Kidney (tissue), 22 donors: ENCODE measurements at regions of chr17 and their contacts with region 1.

Region 1: DNA sequence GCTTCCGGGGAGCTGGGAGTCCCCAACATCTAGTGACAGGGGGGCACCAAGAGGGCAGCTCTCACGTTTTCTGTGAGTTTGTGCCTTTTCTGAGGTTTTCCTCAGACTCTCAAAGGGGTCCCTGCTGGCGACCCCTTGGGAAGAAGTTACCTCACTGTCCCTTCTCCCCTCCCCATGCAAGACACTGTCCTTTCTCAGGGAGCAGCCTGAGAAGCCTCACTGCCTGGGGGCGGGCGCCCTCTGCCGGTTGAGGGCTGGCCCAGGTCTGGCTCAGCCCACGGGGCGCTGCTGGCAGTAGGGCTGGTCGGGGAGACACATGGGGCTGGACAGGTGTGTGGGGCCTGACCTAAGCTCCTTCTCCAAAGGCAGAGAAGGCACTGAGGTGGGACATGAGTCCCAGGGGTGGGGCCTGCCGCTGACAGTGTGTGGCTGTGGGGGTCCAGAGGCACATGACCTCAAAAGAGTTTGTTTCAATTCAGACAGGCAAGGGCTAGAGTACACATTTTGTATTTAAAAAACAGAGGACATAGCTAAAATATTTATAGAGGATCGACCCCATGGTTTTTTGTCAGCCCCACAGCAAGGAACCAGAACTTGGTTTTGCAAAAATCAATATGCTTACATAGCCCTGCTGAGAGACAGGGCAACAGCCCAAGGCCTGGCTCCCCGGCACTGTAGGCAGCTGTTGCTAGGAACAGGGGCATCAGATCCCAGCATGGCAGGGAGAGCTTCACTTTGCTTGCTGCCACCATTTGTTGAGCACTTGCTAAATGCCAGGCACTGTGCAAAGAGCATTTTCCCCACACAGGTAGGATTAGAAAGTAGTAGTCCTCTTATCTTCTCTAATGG is 18.5 kb upstream of the ALDH3A1 start:
- DNase-seq: peak; percentile 70 to 90 (median 79)
- H3K4me3 ChIP-seq: no peak overlapping the region
- H3K27ac ChIP-seq: no peak overlapping the region
- H3K4me1 ChIP-seq: peaks cover 0 to 3% (median 0%) of the 10 kb centered on the region in 3 donors
- H3K27me3 ChIP-seq: no peaks in the 10 kb centered on the region
- CTCF ChIP-seq: peak; percentile 92

Region 2: GRCh38 chr17:19517699-19518098 is 248.9 kb before region 1 on chr17:
- intact Hi-C with region 1: loop called (anchors 5 kb)
- DNase-seq: no peak
- H3K4me3 ChIP-seq: no peak overlapping the region
- H3K27ac ChIP-seq: no peak overlapping the region
- H3K4me1 ChIP-seq: no peaks in the 10 kb centered on the region
- H3K27me3 ChIP-seq: no peaks in the 10 kb centered on the region
- CTCF ChIP-seq: no peak

Region 3: DNA sequence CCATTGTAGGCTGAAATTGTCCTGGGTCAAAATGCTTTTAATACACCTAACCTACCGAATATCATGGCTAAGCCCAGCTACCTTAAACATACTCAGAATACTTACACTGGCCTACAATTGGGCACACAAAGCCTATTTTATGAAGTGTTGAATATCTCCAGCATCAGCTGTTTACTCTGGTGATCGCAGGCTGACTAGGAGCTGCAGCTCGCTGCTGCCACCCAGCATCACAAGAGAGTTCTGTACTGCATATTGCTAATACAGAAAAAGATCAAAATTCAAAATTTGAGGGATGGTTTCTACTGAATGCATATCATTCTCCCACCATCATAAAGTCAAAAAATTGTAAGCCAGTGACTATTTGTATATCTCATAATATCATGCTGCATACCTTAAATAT is 45.8 kb after region 1 on chr17:
- intact Hi-C with region 1: no loop called
- DNase-seq: peak in 1 of 5 donors; percentile 24
- H3K4me3 ChIP-seq: no peak overlapping the region
- H3K27ac ChIP-seq: no peak overlapping the region
- H3K4me1 ChIP-seq: no peaks in the 10 kb centered on the region
- H3K27me3 ChIP-seq: no peaks in the 10 kb centered on the region
- CTCF ChIP-seq: no peak